Breast epithelium (tissue), 4 donors: ENCODE measurements at regions of chr2 and their contacts with region 1.

Region 1: GRCh38 chr2:177155631-177156030 is 57.0 kb upstream of the HNRNPA3 start:
- DNase-seq: no peak
- H3K4me3 ChIP-seq: no peak overlapping the region
- H3K27ac ChIP-seq: no peak overlapping the region
- H3K4me1 ChIP-seq: no peaks in the 10 kb centered on the region
- H3K27me3 ChIP-seq: no peaks in the 10 kb centered on the region
- CTCF ChIP-seq: no peak
- POLR2A ChIP-seq: no peak

Region 2: GRCh38 chr2:177093371-177093770 is 62.3 kb before region 1 on chr2:
- intact Hi-C with region 1: no loop called
- DNase-seq: no peak
- H3K4me3 ChIP-seq: no peak overlapping the region
- H3K27ac ChIP-seq: no peak overlapping the region
- H3K4me1 ChIP-seq: no peaks in the 10 kb centered on the region
- H3K27me3 ChIP-seq: no peaks in the 10 kb centered on the region
- CTCF ChIP-seq: no peak
- POLR2A ChIP-seq: no peak

Region 3: DNA sequence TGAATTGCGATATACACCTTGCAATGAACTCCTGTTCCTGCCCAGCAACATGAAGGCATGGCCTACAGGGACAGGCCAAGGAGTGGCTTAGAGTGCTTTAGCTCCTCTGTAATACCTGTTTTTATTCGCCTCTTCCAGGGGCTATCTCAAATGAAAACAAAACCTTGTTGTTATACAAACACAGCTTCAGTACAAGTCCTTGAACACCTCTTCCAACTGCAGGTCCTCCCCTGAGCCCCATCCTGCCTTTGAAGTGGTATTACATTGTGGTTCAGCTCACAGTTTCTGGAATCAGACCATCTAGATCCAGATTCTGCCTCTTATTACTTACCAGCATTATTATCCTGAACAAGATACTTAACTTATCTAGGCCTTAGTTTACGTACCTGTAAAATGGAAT is 26.0 kb before region 1 on chr2:
- intact Hi-C with region 1: loop called (anchors 2 kb)
- DNase-seq: no peak
- H3K4me3 ChIP-seq: no peak overlapping the region
- H3K27ac ChIP-seq: no peak overlapping the region
- H3K4me1 ChIP-seq: no peaks in the 10 kb centered on the region
- H3K27me3 ChIP-seq: no peaks in the 10 kb centered on the region
- CTCF ChIP-seq: no peak
- POLR2A ChIP-seq: no peak

Region 4: DNA sequence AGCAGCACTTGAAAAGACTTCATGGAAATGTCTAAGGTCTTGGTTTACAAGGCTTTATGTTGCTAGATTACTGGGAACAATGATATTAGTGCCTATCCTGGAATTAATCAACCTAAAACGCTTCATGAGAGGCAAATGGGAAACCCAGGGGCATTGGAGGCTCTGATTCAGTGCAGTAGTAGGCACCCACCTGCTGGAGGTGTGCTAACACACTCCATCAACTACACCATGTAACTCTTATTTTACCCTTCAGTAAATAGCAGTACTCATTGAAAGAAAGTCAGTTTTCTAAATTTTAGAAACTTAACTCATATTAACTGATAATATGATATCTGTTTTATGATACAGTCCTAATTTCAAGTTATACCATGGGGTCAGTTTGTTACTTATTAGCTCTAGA is 39.6 kb after region 1 on chr2:
- intact Hi-C with region 1: no loop called
- DNase-seq: no peak
- H3K4me3 ChIP-seq: no peak overlapping the region
- H3K27ac ChIP-seq: no peak overlapping the region
- H3K4me1 ChIP-seq: no peaks in the 10 kb centered on the region
- H3K27me3 ChIP-seq: no peaks in the 10 kb centered on the region
- CTCF ChIP-seq: no peak
- POLR2A ChIP-seq: no peak

Region 5: DNA sequence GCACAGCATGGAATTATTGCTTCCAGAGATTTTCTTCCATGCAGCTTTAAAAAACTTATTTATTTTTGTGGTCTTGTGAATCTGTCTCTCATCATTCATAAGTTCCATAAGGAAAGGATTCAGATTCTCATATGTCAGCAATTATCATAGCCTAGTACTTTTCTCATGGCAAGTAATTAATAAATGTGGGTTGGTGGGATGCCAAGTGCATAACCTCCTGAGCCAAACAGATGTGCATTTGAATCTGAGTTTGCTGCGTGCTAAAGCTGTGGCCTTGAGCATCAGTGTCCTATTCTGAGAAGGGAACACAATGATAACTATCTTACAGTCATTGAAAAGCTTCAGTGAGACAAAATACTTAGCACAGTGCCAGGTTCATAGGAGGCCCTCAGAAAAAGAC is 585.1 kb after region 1 on chr2:
- intact Hi-C with region 1: loop called (anchors 10 kb)
- DNase-seq: no peak
- H3K4me3 ChIP-seq: no peak overlapping the region
- H3K27ac ChIP-seq: no peak overlapping the region
- H3K4me1 ChIP-seq: no peaks in the 10 kb centered on the region
- H3K27me3 ChIP-seq: no peaks in the 10 kb centered on the region
- CTCF ChIP-seq: no peak
- POLR2A ChIP-seq: no peak